CD14-positive monocyte (primary cell): ENCODE measurements at regions of chr10 and their contacts with region 1.

Region 1: GRCh38 chr10:110210674-110211464 is 3.5 kb downstream of the MXI1 start:
- DNase-seq: peak; percentile 93 to 96 (median 95)
- H3K4me3 ChIP-seq: peak overlapping the region; percentile 55 to 91 (median 63)
- H3K4me3 Mint-ChIP-seq: peak overlapping the region; percentile 93 to 94
- H3K27ac ChIP-seq: peak overlapping the region; percentile 54 to 93
- H3K27ac Mint-ChIP-seq: peak overlapping the region; percentile 93 to 99 (median 97)
- H3K4me1 ChIP-seq: peaks cover 57 to 71% of the 10 kb centered on the region in 2 donors
- H3K4me1 Mint-ChIP-seq: peaks cover 58% of the 10 kb centered on the region
- H3K27me3 ChIP-seq: peaks cover 0 to 7% of the 10 kb centered on the region in 2 donors
- H3K27me3 Mint-ChIP-seq: peaks cover 8 to 20% (median 14%) of the 10 kb centered on the region in 3 donors
- CTCF ChIP-seq: no peak

Region 2: GRCh38 chr10:109343293-109343692 is 867.6 kb before region 1 on chr10:
- intact Hi-C with region 1: no loop called
- DNase-seq: no peak
- H3K4me3 ChIP-seq: no peak overlapping the region
- H3K4me3 Mint-ChIP-seq: no peak overlapping the region
- H3K27ac ChIP-seq: no peak overlapping the region
- H3K27ac Mint-ChIP-seq: no peak overlapping the region
- H3K4me1 ChIP-seq: no peaks in the 10 kb centered on the region
- H3K4me1 Mint-ChIP-seq: no peaks in the 10 kb centered on the region
- H3K27me3 ChIP-seq: no peaks in the 10 kb centered on the region
- H3K27me3 Mint-ChIP-seq: no peaks in the 10 kb centered on the region
- CTCF ChIP-seq: no peak

Region 3: DNA sequence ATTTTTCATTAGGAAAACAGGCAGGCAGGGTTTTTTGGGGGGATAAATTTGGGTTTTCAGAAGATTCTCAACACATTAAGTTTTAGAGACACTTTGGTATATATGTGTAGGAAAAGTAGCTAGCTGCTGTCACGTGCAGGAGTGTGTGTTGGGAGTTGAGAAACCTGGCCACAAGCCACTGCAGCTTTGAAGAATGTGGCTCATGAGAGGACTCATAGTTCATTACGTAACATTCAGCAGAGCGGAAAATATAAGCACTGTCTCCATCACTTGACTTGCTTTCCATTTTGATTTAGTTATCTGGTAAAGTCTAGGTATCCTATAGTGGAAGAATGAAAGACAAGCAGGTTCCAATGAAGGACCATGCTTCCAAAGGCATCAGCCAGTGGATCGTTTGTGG is 62.6 kb after region 1 on chr10:
- intact Hi-C with region 1: loop called in 1 of 2 experiments (anchors 5 kb)
- DNase-seq: peak; percentile 74 to 87 (median 85)
- H3K4me3 ChIP-seq: peak overlapping the region in 1 of 3 experiments; percentile 48
- H3K4me3 Mint-ChIP-seq: peak overlapping the region; percentile 57 to 81
- H3K27ac ChIP-seq: peak overlapping the region; percentile 47 to 68
- H3K27ac Mint-ChIP-seq: peak overlapping the region; percentile 69 to 95 (median 88)
- H3K4me1 ChIP-seq: peaks cover 31 to 35% of the 10 kb centered on the region in 2 donors
- H3K4me1 Mint-ChIP-seq: peaks cover 43% of the 10 kb centered on the region
- H3K27me3 ChIP-seq: no peaks in the 10 kb centered on the region
- H3K27me3 Mint-ChIP-seq: no peaks in the 10 kb centered on the region
- CTCF ChIP-seq: no peak